ENCODE measurements at regions of chr2 and their contacts with region 1.

Region 1: DNA sequence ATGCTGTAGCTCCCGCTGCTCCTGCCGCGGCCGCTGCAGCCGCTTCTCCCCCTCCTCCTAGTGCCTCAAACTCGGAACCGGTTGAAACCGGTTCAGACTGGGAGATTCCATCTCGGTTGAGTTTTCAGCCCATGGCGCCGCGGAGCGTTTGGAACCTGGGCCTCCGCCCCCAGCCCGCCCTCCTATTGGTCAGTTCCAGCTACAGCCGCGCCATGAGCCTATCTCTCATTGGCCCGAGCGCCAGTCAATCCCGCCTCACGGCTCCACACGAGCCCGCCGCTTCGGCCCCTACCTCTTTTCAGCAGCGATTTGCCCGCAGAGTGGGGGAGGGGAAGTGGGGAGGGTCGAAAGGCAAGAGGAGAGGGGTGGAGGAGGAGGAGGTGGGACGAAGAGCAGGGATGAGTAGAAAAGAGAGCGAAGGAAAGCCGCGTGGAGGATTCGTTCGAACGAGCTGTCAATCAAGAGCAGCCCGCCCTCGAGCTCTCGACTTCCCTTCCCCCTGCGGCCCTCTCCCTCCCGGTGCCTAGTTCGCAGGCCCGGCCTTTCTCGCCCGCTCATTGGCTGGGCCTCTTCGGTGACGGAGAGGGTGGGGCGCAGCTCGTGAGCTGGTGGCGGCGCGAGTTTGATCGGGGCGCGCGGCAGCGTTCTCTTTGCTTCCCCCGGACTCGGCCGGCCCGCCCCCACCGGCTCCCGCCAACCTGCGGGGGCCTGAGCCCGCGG is at the start of gene XPO1:
- DNase-seq: peak; percentile 100
- H3K4me3 Mint-ChIP-seq: peak within 1 kb of the TSS; percentile 97
- H3K27ac Mint-ChIP-seq: peak within 1 kb of the TSS; percentile 99
- H3K4me1 Mint-ChIP-seq: peaks cover 30% of the 10 kb centered on the region
- H3K27me3 Mint-ChIP-seq: peaks cover 3% of the 10 kb centered on the region
- total RNA-seq, gene XPO1: 191 to 198 TPM

Region 2: DNA sequence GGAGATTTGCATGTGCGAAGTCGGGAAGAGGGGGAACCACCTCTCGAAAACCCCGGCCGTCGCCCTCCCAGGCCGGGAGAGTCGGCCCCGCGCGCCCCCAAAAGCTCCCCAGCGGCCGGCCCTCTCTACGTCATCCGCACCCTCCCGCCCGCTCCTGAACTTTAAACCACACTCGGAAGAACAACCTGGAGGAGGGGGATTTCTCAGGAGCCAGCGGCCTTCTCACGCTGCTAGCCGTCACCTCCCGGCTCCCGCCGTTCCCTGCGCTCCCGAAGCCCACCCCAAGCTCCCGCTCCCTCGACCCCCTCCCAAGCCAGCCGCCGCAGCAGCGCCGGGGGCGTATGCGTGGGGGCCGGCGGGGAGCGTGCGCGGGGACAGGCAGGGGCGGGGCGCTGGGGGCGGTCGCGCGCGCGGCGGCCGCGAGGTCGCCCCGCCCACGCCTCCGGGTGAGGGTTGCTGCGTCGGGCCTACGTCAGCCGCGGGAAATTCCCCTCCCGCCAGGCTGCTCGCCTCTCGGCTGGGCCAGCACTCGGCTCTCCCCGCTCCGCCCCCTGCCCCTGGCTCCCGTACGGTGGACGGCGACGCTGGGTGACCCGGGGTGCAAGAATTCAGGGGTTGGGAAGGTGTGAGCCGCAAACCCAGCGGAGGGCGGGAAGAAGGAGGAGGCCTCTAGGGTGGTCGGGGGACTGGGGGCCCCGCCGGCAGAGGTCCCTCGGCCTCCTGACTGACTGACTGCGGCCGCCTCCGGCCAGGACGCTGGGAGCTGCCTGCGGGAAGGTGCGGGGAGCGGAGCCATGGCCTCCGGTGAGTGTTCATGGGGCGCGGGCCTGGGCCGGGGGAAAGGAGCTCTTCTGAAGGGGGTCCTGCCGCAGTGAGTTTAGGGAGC is 657.1 kb before region 1 on chr2 and contains the start of gene REL:
- CTCF ChIA-PET with region 1: no interaction called
- POLR2A ChIA-PET with region 1: no interaction called
- intact Hi-C with region 1: loop called (anchors 5 kb)
- DNase-seq: peak; percentile 94
- H3K4me3 Mint-ChIP-seq: peak within 1 kb of the TSS; percentile 100
- H3K27ac Mint-ChIP-seq: peak within 1 kb of the TSS; percentile 96
- H3K4me1 Mint-ChIP-seq: peaks cover 27% of the 10 kb centered on the region
- H3K27me3 Mint-ChIP-seq: no peaks in the 10 kb centered on the region
- total RNA-seq, gene REL: 37.1 to 38.1 TPM

Region 3: DNA sequence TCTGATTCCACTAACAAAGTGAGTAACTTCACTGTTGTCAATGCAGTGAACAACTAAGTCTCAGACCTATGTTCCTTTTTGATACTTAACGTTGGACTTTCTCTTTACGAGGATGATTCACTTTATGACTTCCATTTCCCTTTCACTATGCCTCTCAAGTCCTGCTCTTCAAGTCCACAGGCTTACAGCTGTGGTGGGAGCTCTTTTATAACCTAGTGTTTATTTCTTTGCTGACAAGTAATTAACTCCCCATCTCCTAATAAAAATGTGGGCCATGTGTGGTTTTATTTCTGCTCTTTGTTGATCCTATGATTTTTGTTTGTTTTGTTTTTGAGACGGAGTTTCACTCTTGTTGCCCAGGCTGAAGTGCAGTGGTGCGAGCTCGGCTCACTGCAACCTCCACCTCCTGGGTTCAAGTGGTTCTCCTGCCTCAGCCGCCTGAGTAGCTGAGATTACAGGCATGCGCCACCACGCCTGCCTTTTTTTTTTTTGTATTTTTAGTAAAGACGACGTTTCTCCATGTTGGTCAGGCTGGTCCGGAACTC is 209.6 kb before region 1 on chr2:
- CTCF ChIA-PET with region 1: no interaction called
- POLR2A ChIA-PET with region 1: no interaction called
- intact Hi-C with region 1: loop called (anchors 10 kb)
- DNase-seq: no peak
- H3K4me3 Mint-ChIP-seq: no peak overlapping the region
- H3K27ac Mint-ChIP-seq: peak overlapping the region; percentile 73
- H3K4me1 Mint-ChIP-seq: peaks cover 19% of the 10 kb centered on the region
- H3K27me3 Mint-ChIP-seq: no peaks in the 10 kb centered on the region

Region 4: GRCh38 chr2:61443342-61444041 is 94.9 kb before region 1 on chr2:
- CTCF ChIA-PET with region 1: no interaction called
- POLR2A ChIA-PET with region 1: no interaction called
- intact Hi-C with region 1: no loop called
- DNase-seq: no peak
- H3K4me3 Mint-ChIP-seq: no peak overlapping the region
- H3K27ac Mint-ChIP-seq: no peak overlapping the region
- H3K4me1 Mint-ChIP-seq: peaks cover 48% of the 10 kb centered on the region
- H3K27me3 Mint-ChIP-seq: no peaks in the 10 kb centered on the region

Region 5: DNA sequence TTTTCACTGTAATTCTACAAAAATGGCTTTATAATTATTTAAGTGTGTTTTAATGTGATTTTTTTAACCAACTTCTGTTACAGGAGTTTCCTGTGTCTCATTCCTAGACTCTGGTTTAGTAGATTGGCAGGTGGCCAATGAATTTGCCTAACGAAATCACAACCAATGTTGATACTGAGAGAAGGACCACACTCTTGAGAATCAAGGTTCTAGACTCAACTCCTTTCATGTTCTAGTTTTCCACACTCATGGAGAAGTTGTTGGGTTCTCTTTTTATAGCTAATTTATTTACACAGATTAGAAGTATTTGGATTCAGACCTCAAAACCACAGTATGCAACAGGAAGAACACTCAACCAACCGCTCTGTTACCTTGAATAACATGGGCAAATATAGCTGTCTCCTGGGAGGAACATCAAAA is 44.8 kb before region 1 on chr2:
- CTCF ChIA-PET with region 1: no interaction called
- POLR2A ChIA-PET with region 1: interaction called, 4 read pairs
- intact Hi-C with region 1: loop called (anchors 5 kb)
- DNase-seq: no peak
- H3K4me3 Mint-ChIP-seq: no peak overlapping the region
- H3K27ac Mint-ChIP-seq: peak overlapping the region; percentile 81
- H3K4me1 Mint-ChIP-seq: peaks cover 20% of the 10 kb centered on the region
- H3K27me3 Mint-ChIP-seq: no peaks in the 10 kb centered on the region

Region 6: DNA sequence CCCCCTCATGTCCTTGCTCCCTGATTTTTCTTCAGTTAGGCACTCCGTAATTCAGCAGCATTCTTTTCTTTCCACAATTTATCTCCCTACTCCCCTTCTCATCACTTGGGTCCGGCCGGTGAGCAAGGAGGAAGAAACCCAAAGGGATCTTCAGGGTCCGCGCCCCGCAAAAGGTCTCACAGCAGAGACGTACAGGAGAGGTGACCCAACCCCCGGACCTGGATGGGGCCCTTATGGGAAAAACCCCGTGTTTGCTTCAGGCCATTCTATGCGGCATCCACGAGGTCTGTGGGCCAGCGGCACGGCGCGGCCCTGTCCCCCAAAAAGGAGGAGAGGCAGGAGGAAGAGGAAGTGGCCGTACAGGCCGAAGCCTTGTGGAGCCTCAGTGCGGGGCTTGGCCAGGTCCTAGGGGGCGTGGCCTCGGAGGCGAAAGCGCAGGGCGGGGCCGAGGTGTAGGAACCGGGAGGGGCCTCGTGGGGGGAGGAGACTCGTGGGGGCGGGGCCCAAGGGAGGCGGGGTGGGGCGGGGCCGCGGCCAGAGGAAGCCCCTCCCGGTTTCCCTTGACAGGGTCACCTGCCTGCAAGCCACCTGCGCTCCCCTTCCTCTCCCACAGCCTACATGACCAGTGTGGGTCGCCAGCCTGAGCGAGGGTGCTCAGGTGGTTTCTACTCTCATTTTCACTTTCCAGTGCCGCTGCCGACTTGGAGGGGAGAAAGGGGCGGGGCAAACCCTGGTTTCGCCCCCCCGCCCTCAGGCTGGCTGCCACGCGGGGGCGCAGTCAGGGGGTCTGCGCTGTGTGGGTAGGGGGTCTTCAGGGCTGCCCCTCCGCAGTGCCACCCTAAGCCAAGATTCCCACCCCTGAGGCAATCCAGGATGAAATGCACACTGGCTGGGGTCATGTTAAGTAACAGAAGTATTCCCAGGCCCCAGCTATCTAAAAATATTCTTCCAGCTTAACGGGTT is 156.2 kb after region 1 on chr2:
- CTCF ChIA-PET with region 1: no interaction called
- POLR2A ChIA-PET with region 1: no interaction called
- intact Hi-C with region 1: loop called (anchors 2 kb)
- DNase-seq: peak; percentile 90
- H3K4me3 Mint-ChIP-seq: peak overlapping the region; percentile 79
- H3K27ac Mint-ChIP-seq: peak overlapping the region; percentile 64
- H3K4me1 Mint-ChIP-seq: peaks cover 11% of the 10 kb centered on the region
- H3K27me3 Mint-ChIP-seq: no peaks in the 10 kb centered on the region

Region 7: GRCh38 chr2:61888267-61889055 is 350.1 kb after region 1 on chr2 and contains the start of gene CCT4:
- CTCF ChIA-PET with region 1: no interaction called
- POLR2A ChIA-PET with region 1: no interaction called
- intact Hi-C with region 1: loop called (anchors 1 kb)
- DNase-seq: peak; percentile 92
- H3K4me3 Mint-ChIP-seq: peak within 1 kb of the TSS; percentile 99
- H3K27ac Mint-ChIP-seq: peak within 1 kb of the TSS; percentile 99
- H3K4me1 Mint-ChIP-seq: peaks cover 26% of the 10 kb centered on the region
- H3K27me3 Mint-ChIP-seq: no peaks in the 10 kb centered on the region
- total RNA-seq, gene CCT4: 345 to 352 TPM

Region 8: GRCh38 chr2:62705007-62705829 is 1166.9 kb after region 1 on chr2 and contains the start of gene EHBP1:
- CTCF ChIA-PET with region 1: no interaction called
- POLR2A ChIA-PET with region 1: no interaction called
- intact Hi-C with region 1: loop called (anchors 10 kb)
- DNase-seq: peak; percentile 98
- H3K4me3 Mint-ChIP-seq: peak within 1 kb of the TSS; percentile 76
- H3K27ac Mint-ChIP-seq: peak within 1 kb of the TSS; percentile 74
- H3K4me1 Mint-ChIP-seq: peaks cover 28% of the 10 kb centered on the region
- H3K27me3 Mint-ChIP-seq: no peaks in the 10 kb centered on the region
- total RNA-seq, gene EHBP1: 23.5 to 23.6 TPM